Adrenal gland (tissue), 19 donors: ENCODE measurements at regions of chr12 and their contacts with region 1.

Region 1: DNA sequence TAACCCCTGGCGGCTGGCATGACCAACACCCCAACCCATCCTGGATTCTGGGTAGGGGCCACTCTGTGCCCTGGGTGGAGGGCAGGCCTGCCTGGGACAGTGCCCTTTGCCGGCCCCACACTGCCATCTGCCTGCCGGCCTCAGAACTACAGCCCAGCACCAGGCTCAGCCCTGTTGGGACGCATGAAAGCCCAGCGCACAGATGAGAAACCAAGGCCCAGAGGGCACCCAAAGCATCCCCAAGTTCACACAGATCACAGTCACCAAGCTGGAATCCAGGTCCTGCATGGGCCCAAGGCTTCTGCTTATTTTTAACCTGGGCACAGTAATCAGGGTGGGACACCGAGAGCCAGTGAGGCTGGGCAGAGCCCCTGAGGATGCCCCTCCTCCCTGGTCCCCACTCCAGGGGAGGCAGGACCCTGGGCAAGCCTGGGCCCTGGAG is 26.2 kb downstream of the RFLNA start:
- DNase-seq: peak; percentile 57 to 85 (median 70)
- H3K4me3 ChIP-seq: no peak overlapping the region
- H3K27ac ChIP-seq: no peak overlapping the region
- H3K4me1 ChIP-seq: no peaks in the 10 kb centered on the region
- H3K27me3 ChIP-seq: no peaks in the 10 kb centered on the region
- CTCF ChIP-seq: peak; percentile 84 to 93 (median 90)
- POLR2A ChIP-seq: no peak

Region 2: GRCh38 chr12:124036674-124037109 is 284.4 kb before region 1 on chr12:
- intact Hi-C with region 1: loop called (anchors 5 kb)
- DNase-seq: peak in 6 of 7 donors; percentile 30 to 73 (median 54)
- H3K4me3 ChIP-seq: no peak overlapping the region
- H3K27ac ChIP-seq: no peak overlapping the region
- H3K4me1 ChIP-seq: no peaks in the 10 kb centered on the region
- H3K27me3 ChIP-seq: no peaks in the 10 kb centered on the region
- CTCF ChIP-seq: peak; percentile 70 to 96 (median 90)
- POLR2A ChIP-seq: no peak

Region 3: DNA sequence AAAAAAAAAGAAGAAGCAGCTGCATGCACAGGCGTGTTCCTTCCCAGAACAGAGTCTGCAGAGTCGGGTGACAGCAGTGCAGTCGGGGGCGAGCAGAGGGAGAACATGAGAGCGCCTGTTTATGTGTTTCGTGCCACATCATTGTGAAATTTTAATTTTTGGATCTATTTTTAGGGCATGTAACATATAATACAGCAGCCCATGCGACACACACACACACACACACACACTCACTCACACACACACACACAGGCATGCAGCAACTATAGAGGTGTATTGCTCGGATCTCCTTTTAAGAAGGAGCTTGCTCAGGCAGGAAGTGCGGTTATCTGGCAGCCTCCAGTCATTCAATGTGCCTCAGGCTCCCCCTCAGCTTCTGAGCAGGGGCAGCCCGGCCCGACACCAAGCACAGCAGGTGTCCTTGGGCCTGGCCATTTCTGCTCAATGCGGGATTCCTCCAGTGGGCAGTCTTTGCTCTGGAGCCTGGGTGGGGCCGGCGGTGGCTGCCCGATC is 276.2 kb before region 1 on chr12:
- intact Hi-C with region 1: loop called (anchors 5 kb)
- DNase-seq: no peak
- H3K4me3 ChIP-seq: no peak overlapping the region
- H3K27ac ChIP-seq: no peak overlapping the region
- H3K4me1 ChIP-seq: peaks cover 6 to 18% of the 10 kb centered on the region in 2 donors
- H3K27me3 ChIP-seq: no peaks in the 10 kb centered on the region
- CTCF ChIP-seq: no peak
- POLR2A ChIP-seq: no peak

Region 4: GRCh38 chr12:124053851-124054250 is 267.2 kb before region 1 on chr12:
- intact Hi-C with region 1: loop called in 1 of 2 experiments (anchors 5 kb)
- DNase-seq: peak; percentile 46 to 79 (median 67)
- H3K4me3 ChIP-seq: no peak overlapping the region
- H3K27ac ChIP-seq: no peak overlapping the region
- H3K4me1 ChIP-seq: peaks cover 7 to 13% of the 10 kb centered on the region in 2 donors
- H3K27me3 ChIP-seq: no peaks in the 10 kb centered on the region
- CTCF ChIP-seq: peak; percentile 20 to 79 (median 60)
- POLR2A ChIP-seq: no peak